ENCODE measurements at regions of chr22 and their contacts with region 1.

Region 1: DNA sequence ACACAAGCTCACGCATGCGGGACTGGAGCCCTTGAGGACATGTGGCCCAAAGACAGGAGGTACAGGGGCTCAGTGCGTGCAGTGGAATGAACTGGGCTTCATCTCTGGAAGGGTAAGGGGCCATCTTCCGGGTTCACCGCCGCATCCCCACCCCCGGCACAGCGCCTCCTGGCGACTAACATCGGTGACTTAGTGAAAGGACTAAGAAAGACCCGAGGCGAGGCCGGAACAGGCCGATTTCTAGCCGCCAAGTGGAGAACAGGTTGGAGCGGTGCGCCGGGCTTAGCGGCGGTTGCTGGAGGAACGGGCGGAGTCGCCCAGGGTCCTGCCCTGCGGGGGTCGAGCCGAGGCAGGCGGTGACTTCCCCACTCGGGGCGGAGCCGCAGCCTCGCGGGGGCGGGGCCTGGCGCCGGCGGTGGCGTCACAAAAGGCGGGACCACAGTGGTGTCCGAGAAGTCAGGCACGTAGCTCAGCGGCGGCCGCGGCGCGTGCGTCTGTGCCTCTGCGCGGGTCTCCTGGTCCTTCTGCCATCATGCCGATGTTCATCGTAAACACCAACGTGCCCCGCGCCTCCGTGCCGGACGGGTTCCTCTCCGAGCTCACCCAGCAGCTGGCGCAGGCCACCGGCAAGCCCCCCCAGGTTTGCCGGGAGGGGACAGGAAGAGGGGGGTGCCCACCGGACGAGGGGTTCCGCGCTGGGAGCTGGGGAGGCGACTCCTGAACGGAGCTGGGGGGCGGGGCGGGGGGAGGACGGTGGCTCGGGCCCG is at the start of gene MIF:
- H3K4me3 Mint-ChIP-seq: peak within 1 kb of the TSS; percentile 96
- H3K27ac Mint-ChIP-seq: peak within 1 kb of the TSS; percentile 97
- H3K4me1 Mint-ChIP-seq: peaks cover 49% of the 10 kb centered on the region
- H3K27me3 Mint-ChIP-seq: peaks cover 7% of the 10 kb centered on the region

Region 2: DNA sequence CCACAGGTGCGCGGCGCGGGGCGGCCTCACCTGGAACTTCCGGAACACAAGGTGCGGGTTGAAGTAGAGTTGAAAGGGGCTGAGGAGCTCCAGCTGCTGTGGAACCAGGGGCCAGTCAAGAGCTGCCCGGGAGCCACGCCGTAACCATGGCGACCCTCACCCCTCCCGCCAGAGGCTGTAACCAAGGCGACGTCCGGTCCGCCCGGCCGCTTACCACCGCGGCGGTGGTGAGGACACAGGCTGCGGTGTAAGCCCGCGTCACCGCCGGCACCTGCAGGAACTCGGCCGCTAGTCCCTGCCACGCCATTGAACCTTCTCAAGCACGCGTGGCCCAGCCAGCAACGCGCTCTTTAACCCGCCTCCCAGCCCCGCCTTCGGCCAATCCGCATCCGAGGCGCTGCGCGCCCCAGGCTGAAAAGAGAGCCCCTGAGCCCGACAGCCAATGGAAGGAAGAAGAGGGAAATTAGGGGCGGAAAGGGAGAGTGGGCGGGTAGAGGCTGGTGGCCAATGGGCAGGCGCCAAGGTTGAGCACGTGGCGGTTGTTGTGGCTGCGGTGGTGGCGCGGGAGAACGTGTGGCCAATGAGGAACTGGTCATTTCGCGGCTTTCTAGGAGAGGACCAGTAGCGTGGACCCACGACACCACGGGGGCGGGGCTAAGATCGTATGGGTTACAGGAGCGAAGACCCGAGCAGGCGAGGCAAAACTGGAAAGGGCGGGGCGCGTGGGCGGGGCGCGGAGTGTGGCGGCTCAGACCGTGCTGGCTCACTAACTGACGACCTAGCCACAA is 55.3 kb before region 1 on chr22 and contains the start of gene DERL3:
- intact Hi-C with region 1: loop called (anchors 10 kb)
- H3K4me3 Mint-ChIP-seq: peak within 1 kb of the TSS; percentile 89
- H3K27ac Mint-ChIP-seq: peak within 1 kb of the TSS; percentile 83
- H3K4me1 Mint-ChIP-seq: peaks cover 26% of the 10 kb centered on the region
- H3K27me3 Mint-ChIP-seq: peaks cover 5% of the 10 kb centered on the region

Region 3: DNA sequence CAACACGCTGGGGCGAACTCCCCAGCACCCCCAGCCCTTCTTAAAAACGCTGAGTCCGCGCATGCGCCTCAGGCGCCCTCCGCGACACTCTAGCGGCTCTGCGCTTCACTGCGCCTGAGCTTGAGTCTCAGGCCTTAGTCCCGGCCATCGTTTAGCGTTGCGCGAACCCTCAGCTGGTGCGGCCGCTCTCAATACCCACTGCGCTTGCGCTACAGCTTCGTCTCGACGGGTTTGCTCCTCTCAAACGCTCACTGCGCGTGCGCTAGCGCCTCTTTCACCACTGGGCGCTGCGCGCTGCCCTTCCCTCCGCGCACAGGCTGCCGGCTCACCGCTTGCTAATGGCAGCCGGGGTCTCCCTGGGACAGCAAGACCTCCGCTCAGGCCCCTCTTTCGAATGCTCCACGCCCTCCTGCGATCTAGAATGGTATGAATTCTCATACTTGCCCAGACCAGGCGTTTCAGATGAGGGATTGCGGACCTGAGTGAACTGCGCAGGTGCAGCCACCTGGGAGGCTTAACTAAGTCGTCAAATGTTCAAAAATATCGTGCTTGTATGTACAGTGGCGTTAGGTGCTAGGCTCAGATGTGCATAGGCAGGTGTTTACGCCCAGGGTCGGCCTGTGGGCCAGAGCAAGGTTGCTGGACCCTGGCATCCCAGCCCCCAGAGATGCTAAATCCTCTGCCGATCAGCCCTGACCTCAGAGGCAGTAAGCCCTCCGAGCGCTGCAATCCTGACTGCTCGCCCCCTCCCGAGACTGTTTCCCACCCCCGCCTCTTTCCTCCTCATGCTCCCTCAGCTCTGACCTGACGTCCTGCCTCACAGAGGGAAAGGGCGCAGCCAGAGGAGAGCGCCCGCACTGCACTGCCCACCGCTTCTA is 36.3 kb before region 1 on chr22 and contains the start of gene SLC2A11:
- intact Hi-C with region 1: loop called (anchors 5 kb)
- H3K4me3 Mint-ChIP-seq: peak within 1 kb of the TSS; percentile 91
- H3K27ac Mint-ChIP-seq: peak within 1 kb of the TSS; percentile 87
- H3K4me1 Mint-ChIP-seq: peaks cover 17% of the 10 kb centered on the region
- H3K27me3 Mint-ChIP-seq: peaks cover 2% of the 10 kb centered on the region

Measured in dendritic cell treated with granulocyte-macrophage colony-stimulating factor and Interleukin-4, amounts not matched to agents 40 ng/mL and 50 ng/mL, for 4 days (primary cell).